ENCODE measurements at regions of chr11 and their contacts with region 1.

Region 1: GRCh38 chr11:27331981-27332380 is 31.0 kb downstream of the CCDC34 start:
- DNase-seq: no peak
- H3K4me3 ChIP-seq: no peak overlapping the region
- H3K27ac ChIP-seq: no peak overlapping the region
- H3K4me1 ChIP-seq: no peaks in the 10 kb centered on the region
- H3K27me3 ChIP-seq: no peaks in the 10 kb centered on the region
- CTCF ChIP-seq: no peak
- POLR2A ChIP-seq: no peak

Region 2: DNA sequence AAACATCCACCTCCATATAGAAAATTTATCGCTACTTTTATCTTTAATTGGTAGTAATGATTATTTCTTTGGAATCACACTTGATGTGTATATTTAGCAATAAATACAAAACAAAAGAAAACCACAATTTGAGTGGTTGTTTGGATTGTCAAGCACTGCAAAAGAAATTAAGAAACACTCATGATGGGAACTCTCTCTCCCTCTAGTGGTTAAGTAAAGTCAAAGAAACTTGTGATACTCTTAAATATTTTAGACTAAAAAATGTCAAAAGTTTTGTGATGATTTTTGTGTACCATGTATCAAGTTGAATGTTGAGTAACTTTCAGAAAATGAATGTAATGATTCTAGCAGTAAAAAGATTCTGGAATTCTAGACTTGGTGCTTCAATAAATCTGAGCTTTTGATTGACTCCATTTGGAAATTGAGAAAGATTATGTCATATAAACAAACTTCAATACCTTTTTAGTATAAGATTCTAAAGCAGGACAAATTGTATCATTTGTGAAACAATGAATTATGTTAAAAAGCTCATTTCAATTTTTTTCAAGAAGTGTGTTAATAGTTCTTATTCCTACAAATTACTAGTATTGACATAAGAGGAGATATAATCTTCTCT is 780.7 kb before region 1 on chr11:
- intact Hi-C with region 1: loop called (anchors 10 kb)
- DNase-seq: no peak
- H3K4me3 ChIP-seq: no peak overlapping the region
- H3K27ac ChIP-seq: no peak overlapping the region
- H3K4me1 ChIP-seq: no peaks in the 10 kb centered on the region
- H3K27me3 ChIP-seq: no peaks in the 10 kb centered on the region
- CTCF ChIP-seq: peak in 1 of 4 experiments; percentile 18
- POLR2A ChIP-seq: no peak